ENCODE measurements at regions of chr1 and their contacts with region 1.

Region 1: DNA sequence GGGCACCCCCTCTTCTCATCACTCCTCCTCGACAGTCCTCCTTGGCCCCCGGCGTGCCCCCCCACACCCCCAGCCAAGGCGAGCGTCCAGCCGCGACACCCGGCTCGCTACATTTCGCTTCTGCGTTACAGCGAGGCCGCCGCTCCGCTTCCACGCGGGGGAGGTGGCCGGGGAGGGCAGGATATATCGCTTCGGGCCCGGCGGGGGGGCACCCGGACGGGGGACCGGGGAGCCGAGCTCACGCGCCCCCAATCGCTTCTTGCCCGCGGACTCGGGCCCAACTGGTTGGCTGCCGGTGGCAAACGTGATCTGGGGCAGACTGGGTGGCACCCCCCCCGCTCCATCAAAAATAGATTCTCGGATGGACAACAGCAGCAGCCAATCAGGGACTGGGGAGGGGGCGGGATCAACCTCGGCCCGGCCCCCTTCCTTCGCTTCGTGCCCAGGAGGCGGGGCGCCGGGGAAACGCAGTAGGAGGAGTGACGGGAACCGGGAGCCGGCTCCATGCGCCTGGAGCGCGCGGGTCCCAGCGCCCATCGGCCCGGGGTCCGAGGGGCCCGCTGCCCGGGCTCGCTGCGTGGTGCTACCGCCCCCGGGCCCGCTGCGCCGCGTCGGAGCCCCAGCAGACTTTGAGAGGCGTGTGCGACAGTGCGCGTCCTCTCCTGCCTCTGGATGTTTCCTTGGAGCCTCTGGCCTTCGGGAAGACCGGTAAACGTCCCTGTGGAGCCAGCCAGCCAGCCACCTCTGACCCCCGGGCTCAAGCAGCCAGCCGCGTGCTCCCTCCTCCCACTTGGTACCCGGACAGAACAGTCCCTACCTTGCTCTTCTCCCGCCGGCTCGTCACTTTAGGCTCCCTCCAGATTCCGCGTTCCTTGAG is at the start of gene SLC41A1:
- DNase-seq: peak; percentile 96
- ATAC-seq: peak; percentile 83 to 92
- H3K4me3 ChIP-seq: peak within 1 kb of the TSS; percentile 80 to 92 (median 88)
- H3K27ac ChIP-seq: peak within 1 kb of the TSS; percentile 92 to 98 (median 97)
- H3K4me1 ChIP-seq: peaks cover 48 to 65% of the 10 kb centered on the region in 2 donors
- H3K27me3 ChIP-seq: no peaks in the 10 kb centered on the region
- CTCF ChIP-seq: no peak
- POLR2A ChIP-seq: peak; percentile 97
- total RNA-seq, gene SLC41A1: 21.5 to 39.8 (median 36.8) TPM

Region 2: DNA sequence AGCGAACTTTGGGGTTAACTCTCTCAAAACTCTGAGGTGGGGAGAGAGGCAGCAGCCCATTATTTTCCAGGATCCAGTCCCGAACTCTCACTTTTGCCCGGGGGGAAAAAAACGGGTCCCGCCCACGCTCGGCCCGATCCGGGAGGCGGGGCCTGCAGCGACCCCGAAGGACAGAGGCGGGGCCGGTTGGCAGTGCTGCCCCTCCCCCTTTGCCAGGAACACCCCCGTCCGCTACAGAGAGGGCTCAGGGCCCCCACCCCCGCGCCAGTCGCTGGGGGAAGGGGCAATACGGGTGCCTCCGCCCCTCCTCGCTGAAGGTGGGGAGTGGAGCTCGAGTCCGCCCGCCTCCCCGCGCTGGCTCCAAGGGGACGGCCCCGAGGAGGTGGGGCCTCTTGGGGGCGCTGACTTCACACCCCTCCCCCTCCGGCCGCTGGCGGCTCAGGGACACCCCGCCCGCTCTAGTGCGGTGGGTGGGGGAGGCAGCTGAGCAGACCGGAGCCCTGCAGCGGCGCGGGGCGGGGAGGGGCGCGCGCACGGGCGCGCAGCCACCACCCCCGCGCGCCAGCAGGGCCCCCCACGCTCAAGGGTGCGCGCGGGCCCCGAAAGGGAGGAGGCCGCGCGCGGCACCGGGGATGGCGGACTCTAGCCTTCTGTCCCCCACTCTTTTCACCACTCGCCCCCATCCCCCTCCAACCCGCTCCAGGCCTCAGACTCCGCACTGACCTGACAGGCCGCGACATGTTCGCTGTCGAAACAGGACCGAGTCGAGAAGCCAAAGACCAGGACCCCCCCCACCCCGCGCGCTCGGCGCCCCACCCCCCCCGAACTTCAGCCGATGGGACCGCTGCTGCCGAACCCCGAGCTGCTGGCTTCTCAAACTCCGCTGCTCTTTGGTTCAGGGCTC is 63.6 kb before region 1 on chr1:
- in situ Hi-C with region 1: no loop called
- intact Hi-C with region 1: loop called (anchors 1 kb)
- DNase-seq: peak; percentile 91 to 94
- ATAC-seq: peak; percentile 76 to 77
- H3K4me3 ChIP-seq: peak overlapping the region; percentile 76 to 88 (median 82)
- H3K27ac ChIP-seq: peak overlapping the region; percentile 93 to 97 (median 96)
- H3K4me1 ChIP-seq: peaks cover 34 to 39% of the 10 kb centered on the region in 2 donors
- H3K27me3 ChIP-seq: no peaks in the 10 kb centered on the region
- CTCF ChIP-seq: peak in 1 of 5 experiments; percentile 18
- POLR2A ChIP-seq: peak; percentile 95

Region 3: DNA sequence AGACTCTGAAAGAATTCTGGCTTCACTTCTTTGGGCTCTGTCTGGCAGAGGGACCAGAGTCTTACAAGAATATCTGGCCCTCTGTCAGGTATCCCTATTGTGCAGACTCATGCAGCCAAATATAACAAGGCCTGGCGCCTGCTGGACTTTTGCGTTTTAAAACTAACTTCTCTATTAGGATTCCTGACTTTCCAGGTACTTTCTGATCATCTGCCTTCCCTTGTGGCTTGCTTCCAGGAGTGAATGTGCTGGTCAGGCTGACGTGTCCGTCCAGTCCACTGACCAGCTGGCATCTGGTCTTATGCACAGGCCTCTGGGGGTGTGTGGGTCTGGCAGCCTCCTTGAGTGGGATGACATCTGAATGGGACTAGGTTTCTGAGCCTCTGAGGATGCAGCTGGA is 29.2 kb before region 1 on chr1:
- in situ Hi-C with region 1: no loop called
- intact Hi-C with region 1: loop called (anchors 2 kb)
- DNase-seq: peak; percentile 50 to 72
- ATAC-seq: peak; percentile 76 to 86
- H3K4me3 ChIP-seq: no peak overlapping the region
- H3K27ac ChIP-seq: peak overlapping the region; percentile 70 to 84 (median 80)
- H3K4me1 ChIP-seq: peaks cover 15 to 23% of the 10 kb centered on the region in 2 donors
- H3K27me3 ChIP-seq: no peaks in the 10 kb centered on the region
- CTCF ChIP-seq: no peak
- POLR2A ChIP-seq: no peak

Region 4: DNA sequence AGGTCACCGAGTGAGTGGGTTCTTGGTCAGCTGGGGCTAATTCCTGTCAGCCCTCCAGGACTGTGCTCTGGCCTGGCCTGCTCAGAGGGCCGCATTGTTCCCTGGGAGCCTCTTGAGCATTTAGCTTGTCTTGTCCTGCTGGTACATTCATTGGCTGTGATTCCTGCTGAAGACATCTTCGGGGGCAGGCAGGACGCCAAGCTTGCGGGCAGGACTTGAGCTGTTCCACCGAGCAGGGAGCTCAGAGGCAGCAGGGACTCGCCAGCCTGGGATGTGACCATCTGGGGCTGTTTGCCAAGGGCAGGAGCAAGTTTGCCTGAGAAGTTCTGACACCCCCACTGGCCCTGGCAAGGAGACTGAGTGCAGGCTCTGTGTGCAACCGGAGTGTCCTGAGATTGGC is 137.2 kb after region 1 on chr1:
- in situ Hi-C with region 1: no loop called
- intact Hi-C with region 1: no loop called
- DNase-seq: peak; percentile 78 to 85
- ATAC-seq: peak; percentile 85 to 86
- H3K4me3 ChIP-seq: no peak overlapping the region
- H3K27ac ChIP-seq: peak overlapping the region in 3 of 4 donors; percentile 11 to 71 (median 14)
- H3K4me1 ChIP-seq: peaks cover 0 to 16% of the 10 kb centered on the region in 2 donors
- H3K27me3 ChIP-seq: no peaks in the 10 kb centered on the region
- CTCF ChIP-seq: no peak
- POLR2A ChIP-seq: no peak

Region 5: DNA sequence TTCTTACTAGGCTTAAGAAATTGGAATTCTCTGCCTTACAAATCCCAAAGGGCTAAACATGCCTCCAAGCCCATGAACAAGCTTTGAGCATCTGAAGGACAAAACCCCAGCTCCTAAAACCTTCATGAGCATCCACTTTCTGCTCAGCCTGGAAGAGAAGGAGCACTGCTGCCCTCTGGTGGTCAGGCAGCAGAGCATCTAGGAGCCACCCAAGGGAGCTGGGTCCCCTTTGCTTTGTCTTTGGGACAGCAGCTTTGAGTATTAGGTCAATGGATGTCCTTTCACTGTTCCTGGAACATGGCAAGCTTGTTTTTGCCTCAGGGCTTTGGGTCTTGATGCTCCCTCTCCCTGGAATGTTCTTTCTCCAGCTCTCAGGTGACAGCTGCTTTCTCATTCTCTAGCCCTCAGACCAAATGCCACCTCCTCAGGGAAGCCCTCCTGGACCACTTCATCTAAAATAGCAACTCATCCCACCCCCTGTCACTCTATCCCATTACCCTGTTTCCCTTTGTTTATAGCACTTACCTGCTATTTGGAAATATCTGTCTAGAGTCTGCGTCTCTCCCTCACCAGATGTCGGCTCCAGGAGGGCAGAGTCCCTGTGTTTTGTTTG is 164.4 kb after region 1 on chr1:
- in situ Hi-C with region 1: no loop called
- intact Hi-C with region 1: loop called (anchors 5 kb)
- DNase-seq: peak; percentile 45 to 50
- ATAC-seq: peak; percentile 83 to 88
- H3K4me3 ChIP-seq: no peak overlapping the region
- H3K27ac ChIP-seq: peak overlapping the region; percentile 66 to 85 (median 71)
- H3K4me1 ChIP-seq: peaks cover 14 to 20% of the 10 kb centered on the region in 2 donors
- H3K27me3 ChIP-seq: no peaks in the 10 kb centered on the region
- CTCF ChIP-seq: peak; percentile 91 to 97 (median 94)
- POLR2A ChIP-seq: no peak

Measured in gastrocnemius medialis (tissue), 4 donors.